Calu3 (cell line): ENCODE measurements at regions of chr20 and their contacts with region 1.

Region 1: GRCh38 chr20:17682103-17682888 is at the start of gene RRBP1:
- DNase-seq: peak; percentile 86
- H3K4me3 Mint-ChIP-seq: peak within 1 kb of the TSS; percentile 68
- H3K27ac Mint-ChIP-seq: no peak within 1 kb of the TSS
- H3K4me1 Mint-ChIP-seq: peaks cover 11% of the 10 kb centered on the region
- H3K27me3 Mint-ChIP-seq: peaks cover 43% of the 10 kb centered on the region
- CTCF ChIP-seq: no peak
- total RNA-seq, gene RRBP1: 45.3 and 56.8 TPM in 2 replicates

Region 2: GRCh38 chr20:17721802-17722486 is 39.6 kb after region 1 on chr20:
- CTCF ChIA-PET with region 1: interaction called, 10 read pairs
- intact Hi-C with region 1: no loop called
- DNase-seq: no peak
- H3K4me3 Mint-ChIP-seq: no peak overlapping the region
- H3K27ac Mint-ChIP-seq: no peak overlapping the region
- H3K4me1 Mint-ChIP-seq: no peaks in the 10 kb centered on the region
- H3K27me3 Mint-ChIP-seq: no peaks in the 10 kb centered on the region
- CTCF ChIP-seq: no peak

Region 3: DNA sequence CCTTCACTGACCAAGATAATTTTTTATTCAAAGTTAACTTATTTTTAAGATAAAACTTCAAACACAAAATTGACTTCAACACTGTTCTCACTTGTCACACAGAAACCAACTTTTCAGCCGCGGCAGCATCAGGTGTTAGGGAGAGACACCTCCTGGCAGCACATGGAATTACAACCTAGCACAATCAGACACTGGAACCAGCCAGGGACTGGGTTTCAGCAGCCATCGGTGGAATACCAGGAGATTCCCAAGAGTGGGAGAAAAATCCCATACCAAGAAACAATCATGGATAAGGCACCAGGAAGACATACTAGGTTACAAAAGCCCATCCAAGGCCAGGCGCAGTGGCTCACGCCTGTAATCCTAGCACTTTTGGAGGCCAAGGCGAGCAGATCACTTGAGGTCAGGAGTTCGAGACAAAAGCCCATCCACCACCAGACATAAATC is 216.3 kb after region 1 on chr20:
- CTCF ChIA-PET with region 1: interaction called, 4 read pairs
- intact Hi-C with region 1: loop called (anchors 10 kb)
- DNase-seq: peak; percentile 41
- H3K4me3 Mint-ChIP-seq: no peak overlapping the region
- H3K27ac Mint-ChIP-seq: no peak overlapping the region
- H3K4me1 Mint-ChIP-seq: no peaks in the 10 kb centered on the region
- H3K27me3 Mint-ChIP-seq: no peaks in the 10 kb centered on the region
- CTCF ChIP-seq: no peak